Adrenal gland (tissue), 19 donors: ENCODE measurements at regions of chr13 and their contacts with region 1.

Region 1: GRCh38 chr13:27533155-27533643 is 82.8 kb upstream of the MTIF3 start:
- DNase-seq: peak; percentile 88 to 95 (median 92)
- H3K4me3 ChIP-seq: peak overlapping the region in 1 of 4 donors; percentile 33
- H3K27ac ChIP-seq: no peak overlapping the region
- H3K4me1 ChIP-seq: no peaks in the 10 kb centered on the region
- H3K27me3 ChIP-seq: no peaks in the 10 kb centered on the region
- CTCF ChIP-seq: peak; percentile 90 to 97 (median 96)
- POLR2A ChIP-seq: no peak

Region 2: DNA sequence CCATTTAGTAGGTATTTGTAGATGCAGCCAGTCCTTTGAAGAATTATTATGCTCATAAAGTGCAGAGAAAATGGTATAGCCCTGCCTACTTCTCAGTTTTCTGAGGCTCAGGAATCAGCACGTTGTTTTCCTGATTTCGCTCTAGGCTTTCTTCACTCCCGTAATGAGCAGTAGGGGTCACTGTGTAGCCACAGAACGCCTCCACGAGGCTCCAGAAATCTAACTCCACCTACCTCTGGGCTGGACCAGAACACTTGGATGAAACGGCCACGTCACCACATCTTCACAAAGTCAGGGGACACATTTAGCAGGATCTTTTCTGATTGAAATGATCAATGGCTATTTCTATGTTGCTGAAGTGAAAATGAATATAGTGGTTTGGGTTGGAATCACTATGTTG is 158.5 kb before region 1 on chr13:
- intact Hi-C with region 1: loop called in 1 of 2 experiments (anchors 10 kb)
- DNase-seq: peak; percentile 47 to 86 (median 69)
- H3K4me3 ChIP-seq: no peak overlapping the region
- H3K27ac ChIP-seq: no peak overlapping the region
- H3K4me1 ChIP-seq: no peaks in the 10 kb centered on the region
- H3K27me3 ChIP-seq: peaks cover 25% of the 10 kb centered on the region
- CTCF ChIP-seq: peak; percentile 44 to 70 (median 62)
- POLR2A ChIP-seq: no peak

Region 3: GRCh38 chr13:27619728-27620376 is 86.7 kb after region 1 on chr13:
- intact Hi-C with region 1: loop called in 1 of 2 experiments (anchors 5 kb)
- DNase-seq: peak; percentile 36 to 66 (median 48)
- H3K4me3 ChIP-seq: peak overlapping the region; percentile 45 to 80 (median 73)
- H3K27ac ChIP-seq: peak overlapping the region; percentile 85 to 98 (median 95)
- H3K4me1 ChIP-seq: peaks cover 13 to 42% of the 10 kb centered on the region in 2 donors
- H3K27me3 ChIP-seq: no peaks in the 10 kb centered on the region
- CTCF ChIP-seq: peak in 4 of 6 experiments; percentile 35 to 54 (median 40)
- POLR2A ChIP-seq: no peak

Region 4: DNA sequence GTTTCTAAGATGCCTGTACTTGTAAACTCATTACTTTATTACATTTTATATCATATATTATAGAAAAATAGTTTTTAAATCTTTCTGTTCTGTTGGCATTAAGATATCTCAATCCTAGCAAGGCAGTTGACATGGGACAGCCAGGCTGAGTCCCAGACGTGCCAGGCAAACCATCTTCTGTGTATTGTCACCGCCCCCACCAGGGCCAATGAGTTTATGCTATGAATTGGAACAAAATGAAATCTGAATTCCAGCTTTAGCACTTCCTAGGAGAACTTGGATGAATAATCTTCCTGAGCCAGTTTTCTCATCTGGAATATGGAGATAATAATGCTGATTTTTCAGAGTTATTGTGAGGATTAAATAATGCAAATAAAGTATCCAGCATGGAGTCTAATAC is 179.2 kb after region 1 on chr13:
- intact Hi-C with region 1: loop called (anchors 10 kb)
- DNase-seq: peak; percentile 32 to 78 (median 60)
- H3K4me3 ChIP-seq: no peak overlapping the region
- H3K27ac ChIP-seq: no peak overlapping the region
- H3K4me1 ChIP-seq: no peaks in the 10 kb centered on the region
- H3K27me3 ChIP-seq: no peaks in the 10 kb centered on the region
- CTCF ChIP-seq: peak in 5 of 6 experiments; percentile 12 to 61 (median 38)
- POLR2A ChIP-seq: no peak

Region 5: GRCh38 chr13:27783111-27783510 is 249.9 kb after region 1 on chr13:
- intact Hi-C with region 1: loop called in 1 of 2 experiments (anchors 5 kb)
- DNase-seq: peak in 5 of 7 donors; percentile 22 to 56 (median 34)
- H3K4me3 ChIP-seq: no peak overlapping the region
- H3K27ac ChIP-seq: no peak overlapping the region
- H3K4me1 ChIP-seq: no peaks in the 10 kb centered on the region
- H3K27me3 ChIP-seq: peaks cover 12% of the 10 kb centered on the region
- CTCF ChIP-seq: peak in 5 of 6 experiments; percentile 34 to 65 (median 43)
- POLR2A ChIP-seq: no peak